ENCODE measurements at regions of chr2 and their contacts with region 1.

Region 1: DNA sequence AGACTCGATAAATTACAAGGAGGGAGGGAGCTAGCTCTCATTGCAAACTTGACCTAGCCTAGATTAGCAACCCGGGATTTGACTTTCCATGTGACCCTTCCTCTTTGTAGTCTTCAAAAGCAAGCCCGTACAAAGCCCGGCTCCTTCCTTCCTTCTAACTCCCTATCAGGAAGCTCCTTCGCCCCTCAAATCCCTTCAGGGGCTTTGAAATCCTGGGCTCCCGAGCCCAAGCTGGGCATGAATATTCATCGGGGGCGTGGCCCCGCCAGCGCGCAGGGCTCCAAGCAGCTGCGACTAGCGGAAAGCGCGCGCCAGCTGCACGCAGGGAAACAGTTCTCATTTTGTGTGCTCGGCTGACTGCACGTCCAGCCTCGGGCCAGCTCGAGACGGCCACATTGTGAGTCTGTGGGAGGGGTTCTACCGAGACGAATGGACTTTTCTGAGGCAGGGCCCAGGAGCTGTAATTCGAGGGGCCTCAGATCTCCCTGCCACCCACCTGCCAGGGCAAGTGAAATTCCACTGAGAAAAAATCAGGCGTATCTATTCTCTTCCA is 84.0 kb upstream of the PELI1 start:
- DNase-seq: peak in 8 of 9 donors; percentile 38 to 61 (median 57)
- ATAC-seq: peak; percentile 94
- H3K4me3 ChIP-seq: peak overlapping the region; percentile 48
- H3K4me3 Mint-ChIP-seq: peak overlapping the region; percentile 86 to 100 (median 95)
- H3K27ac ChIP-seq: peak overlapping the region; percentile 78
- H3K27ac Mint-ChIP-seq: peak overlapping the region; percentile 83 to 99 (median 95)
- H3K4me1 ChIP-seq: peaks cover 0 to 15% of the 10 kb centered on the region in 2 donors
- H3K4me1 Mint-ChIP-seq: peaks cover 16 to 45% (median 38%) of the 10 kb centered on the region in 7 donors
- H3K27me3 ChIP-seq: no peaks in the 10 kb centered on the region
- H3K27me3 Mint-ChIP-seq: no peaks in the 10 kb centered on the region

Region 2: DNA sequence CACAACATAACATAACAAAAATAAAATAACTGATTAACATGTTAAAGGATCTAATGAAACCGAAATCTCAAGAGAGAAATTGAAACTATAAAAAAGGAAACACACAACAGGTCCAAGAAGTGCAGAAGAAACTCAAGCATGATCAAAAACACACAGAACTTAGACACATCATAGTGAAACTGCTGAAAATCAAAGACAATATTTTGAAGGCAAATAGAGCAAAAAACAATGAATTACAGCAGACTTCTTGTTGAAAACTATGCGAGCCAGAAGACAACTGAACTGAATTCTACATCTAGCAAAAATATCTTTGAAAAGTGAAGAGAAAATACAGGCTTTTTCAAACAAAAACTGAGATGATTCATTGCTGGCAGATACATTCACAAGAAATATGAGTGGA is 325.2 kb before region 1 on chr2:
- CTCF ChIA-PET with region 1: no interaction called
- POLR2A ChIA-PET with region 1: no interaction called
- intact Hi-C with region 1: no loop called
- DNase-seq: no peak
- ATAC-seq: no peak
- H3K4me3 ChIP-seq: no peak overlapping the region
- H3K4me3 Mint-ChIP-seq: peak overlapping the region in 2 of 10 donors; percentile 17 to 36
- H3K27ac ChIP-seq: no peak overlapping the region
- H3K27ac Mint-ChIP-seq: peak overlapping the region in 4 of 9 donors; percentile 34 to 52 (median 45)
- H3K4me1 ChIP-seq: peaks cover 0 to 4% of the 10 kb centered on the region in 2 donors
- H3K4me1 Mint-ChIP-seq: peaks cover 4 to 15% (median 11%) of the 10 kb centered on the region in 7 donors
- H3K27me3 ChIP-seq: no peaks in the 10 kb centered on the region
- H3K27me3 Mint-ChIP-seq: no peaks in the 10 kb centered on the region

Region 3: DNA sequence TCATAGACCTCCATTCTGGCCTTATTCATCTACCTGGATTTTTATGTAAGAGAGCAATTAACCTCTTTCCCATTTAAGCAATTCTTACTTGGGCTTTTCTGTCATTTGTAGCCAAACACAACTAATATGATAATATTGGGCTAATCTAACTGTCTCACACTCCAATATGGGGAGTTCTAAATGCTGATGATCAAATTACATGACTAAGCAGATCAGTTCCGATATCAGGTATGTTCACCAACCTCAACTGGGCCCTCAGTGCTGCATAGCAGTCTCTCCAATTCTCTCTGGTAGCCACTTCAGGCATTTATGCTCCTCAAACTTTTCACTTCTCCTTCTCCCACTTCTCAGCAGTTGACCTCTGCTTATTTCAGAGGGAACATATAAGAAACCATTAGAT is 148.0 kb before region 1 on chr2:
- CTCF ChIA-PET with region 1: no interaction called
- POLR2A ChIA-PET with region 1: no interaction called
- intact Hi-C with region 1: no loop called
- DNase-seq: no peak
- ATAC-seq: no peak
- H3K4me3 ChIP-seq: no peak overlapping the region
- H3K4me3 Mint-ChIP-seq: no peak overlapping the region
- H3K27ac ChIP-seq: no peak overlapping the region
- H3K27ac Mint-ChIP-seq: no peak overlapping the region
- H3K4me1 ChIP-seq: no peaks in the 10 kb centered on the region
- H3K4me1 Mint-ChIP-seq: peaks cover 0 to 4% (median 0%) of the 10 kb centered on the region in 7 donors
- H3K27me3 ChIP-seq: no peaks in the 10 kb centered on the region
- H3K27me3 Mint-ChIP-seq: peaks cover 0 to 17% (median 0%) of the 10 kb centered on the region in 5 donors

Region 4: GRCh38 chr2:64101141-64101591 is 127.0 kb before region 1 on chr2:
- CTCF ChIA-PET with region 1: interaction called, 5 read pairs
- POLR2A ChIA-PET with region 1: interaction called, 4 read pairs
- intact Hi-C with region 1: loop called in 1 of 2 experiments (anchors 5 kb)
- DNase-seq: peak in 6 of 9 donors; percentile 10 to 57 (median 44)
- ATAC-seq: peak; percentile 56
- H3K4me3 ChIP-seq: no peak overlapping the region
- H3K4me3 Mint-ChIP-seq: peak overlapping the region in 9 of 10 donors; percentile 18 to 83 (median 55)
- H3K27ac ChIP-seq: peak overlapping the region; percentile 33
- H3K27ac Mint-ChIP-seq: peak overlapping the region; percentile 44 to 88 (median 80)
- H3K4me1 ChIP-seq: peaks cover 0 to 16% of the 10 kb centered on the region in 2 donors
- H3K4me1 Mint-ChIP-seq: peaks cover 14 to 66% (median 60%) of the 10 kb centered on the region in 7 donors
- H3K27me3 ChIP-seq: no peaks in the 10 kb centered on the region
- H3K27me3 Mint-ChIP-seq: no peaks in the 10 kb centered on the region

Region 5: DNA sequence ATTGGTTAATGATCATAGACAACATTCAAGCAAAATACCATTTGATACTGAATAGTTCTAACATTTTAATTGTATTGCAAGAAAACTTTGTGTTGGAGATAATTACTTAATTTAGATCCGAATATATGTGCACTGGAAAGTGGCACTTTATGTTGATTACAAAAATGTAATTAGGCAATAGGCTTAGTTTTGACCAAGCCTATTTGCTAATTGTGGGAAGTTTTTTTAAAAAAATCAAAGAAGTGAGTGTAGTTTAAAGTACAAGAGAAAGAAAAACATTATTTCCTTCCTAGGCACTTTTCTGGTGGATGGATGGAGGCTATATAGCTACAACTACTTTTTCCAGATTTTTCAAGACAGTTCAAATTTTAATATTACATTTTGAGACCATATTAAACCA is 65.7 kb before region 1 on chr2:
- CTCF ChIA-PET with region 1: no interaction called
- POLR2A ChIA-PET with region 1: no interaction called
- intact Hi-C with region 1: no loop called
- DNase-seq: no peak
- ATAC-seq: no peak
- H3K4me3 ChIP-seq: no peak overlapping the region
- H3K4me3 Mint-ChIP-seq: no peak overlapping the region
- H3K27ac ChIP-seq: no peak overlapping the region
- H3K27ac Mint-ChIP-seq: no peak overlapping the region
- H3K4me1 ChIP-seq: no peaks in the 10 kb centered on the region
- H3K4me1 Mint-ChIP-seq: no peaks in the 10 kb centered on the region
- H3K27me3 ChIP-seq: no peaks in the 10 kb centered on the region
- H3K27me3 Mint-ChIP-seq: peaks cover 0 to 4% (median 0%) of the 10 kb centered on the region in 5 donors

Region 6: GRCh38 chr2:66030553-66030952 is 1802.4 kb after region 1 on chr2:
- CTCF ChIA-PET with region 1: no interaction called
- POLR2A ChIA-PET with region 1: no interaction called
- intact Hi-C with region 1: no loop called
- DNase-seq: no peak
- ATAC-seq: no peak
- H3K4me3 ChIP-seq: no peak overlapping the region
- H3K4me3 Mint-ChIP-seq: no peak overlapping the region
- H3K27ac ChIP-seq: no peak overlapping the region
- H3K27ac Mint-ChIP-seq: no peak overlapping the region
- H3K4me1 ChIP-seq: no peaks in the 10 kb centered on the region
- H3K4me1 Mint-ChIP-seq: no peaks in the 10 kb centered on the region
- H3K27me3 ChIP-seq: no peaks in the 10 kb centered on the region
- H3K27me3 Mint-ChIP-seq: peaks cover 0 to 8% (median 0%) of the 10 kb centered on the region in 5 donors